ENCODE measurements at regions of chr1 and their contacts with region 1.

Region 1: DNA sequence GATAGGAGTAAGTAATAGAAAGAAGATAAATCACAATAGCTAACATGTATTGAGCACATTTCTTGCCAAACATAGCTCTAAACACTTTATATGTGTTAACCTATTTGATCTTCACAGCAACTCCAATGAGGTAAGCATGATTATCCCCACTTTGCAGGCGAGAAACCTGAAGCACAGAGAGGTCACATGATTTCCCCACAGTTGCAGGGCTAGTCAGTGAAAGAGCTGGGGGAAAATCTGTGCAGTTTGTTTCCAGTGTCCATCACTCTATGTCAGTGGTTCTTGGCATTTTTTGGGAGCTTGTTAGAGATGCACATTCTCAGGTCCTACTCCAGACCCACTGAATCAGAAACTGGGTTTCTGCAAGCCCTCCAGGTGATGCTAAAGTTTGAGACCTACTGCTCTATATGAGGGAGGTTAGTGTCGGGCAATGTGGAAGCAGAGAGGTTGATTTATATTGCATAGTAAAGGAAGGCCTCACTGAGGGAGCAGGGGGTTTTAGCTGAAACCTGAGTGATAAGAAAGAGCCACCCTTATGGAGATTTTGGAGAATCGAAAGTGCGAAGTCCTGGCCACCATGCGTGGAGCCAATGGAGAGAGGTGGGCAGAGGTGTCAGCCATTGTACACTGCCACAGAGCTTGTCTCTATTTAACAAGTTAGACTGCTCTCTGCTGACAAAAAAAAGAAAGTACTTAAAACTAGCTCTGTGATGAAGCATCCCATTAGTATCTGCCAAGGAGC is 20.9 kb downstream of the MCOLN3 start:
- DNase-seq: peak in 4 of 5 donors; percentile 28 to 69 (median 52)
- H3K4me3 ChIP-seq: peak overlapping the region; percentile 13
- H3K4me3 Mint-ChIP-seq: peak overlapping the region; percentile 67 to 93 (median 88)
- H3K27ac ChIP-seq: peak overlapping the region; percentile 34
- H3K27ac Mint-ChIP-seq: peak overlapping the region; percentile 55 to 96 (median 93)
- H3K4me1 ChIP-seq: peaks cover 8% of the 10 kb centered on the region
- H3K4me1 Mint-ChIP-seq: peaks cover 10 to 18% (median 14%) of the 10 kb centered on the region in 3 donors
- H3K27me3 ChIP-seq: no peaks in the 10 kb centered on the region
- H3K27me3 Mint-ChIP-seq: no peaks in the 10 kb centered on the region

Region 2: GRCh38 chr1:84913555-84913892 is 113.9 kb before region 1 on chr1:
- CTCF ChIA-PET with region 1: no interaction called
- POLR2A ChIA-PET with region 1: no interaction called
- DNase-seq: no peak
- H3K4me3 ChIP-seq: no peak overlapping the region
- H3K4me3 Mint-ChIP-seq: no peak overlapping the region
- H3K27ac ChIP-seq: no peak overlapping the region
- H3K27ac Mint-ChIP-seq: no peak overlapping the region
- H3K4me1 ChIP-seq: no peaks in the 10 kb centered on the region
- H3K4me1 Mint-ChIP-seq: no peaks in the 10 kb centered on the region
- H3K27me3 ChIP-seq: no peaks in the 10 kb centered on the region
- H3K27me3 Mint-ChIP-seq: peaks cover 3 to 15% of the 10 kb centered on the region in 2 donors

Region 3: DNA sequence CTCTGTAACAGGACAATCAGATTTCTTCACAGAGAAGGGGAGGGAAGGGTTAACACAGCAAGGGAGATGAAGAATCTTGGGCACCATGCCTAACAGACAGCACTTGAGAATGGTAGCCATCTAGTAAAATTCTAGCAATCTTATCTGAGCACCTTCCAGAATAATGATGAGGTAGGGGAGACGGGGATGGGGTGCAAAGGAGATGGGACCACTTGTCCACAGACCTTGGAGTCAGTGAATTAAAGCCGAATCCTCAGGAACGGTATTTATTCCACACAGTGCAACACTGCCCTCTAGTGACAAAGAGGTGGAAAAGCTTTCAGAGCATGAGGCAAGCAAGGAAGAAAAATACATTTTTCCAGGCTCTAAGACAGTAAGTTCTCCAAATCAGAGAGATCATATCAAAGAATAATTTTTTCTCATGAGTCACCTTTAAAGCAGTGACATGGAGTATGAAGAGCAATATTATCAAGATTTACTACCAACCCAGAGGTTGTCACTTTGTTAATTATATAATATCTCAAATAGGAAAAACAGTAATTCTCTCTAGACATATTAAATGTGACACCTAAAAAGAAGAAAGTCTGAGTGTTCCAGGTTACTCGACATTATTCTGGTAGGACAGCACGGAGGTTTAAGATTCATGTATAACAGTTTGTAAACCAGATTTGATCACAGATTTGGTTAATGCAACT is 91.2 kb before region 1 on chr1:
- CTCF ChIA-PET with region 1: interaction called, 24 read pairs
- POLR2A ChIA-PET with region 1: no interaction called
- DNase-seq: peak in 3 of 5 donors; percentile 52 to 60 (median 54)
- H3K4me3 ChIP-seq: no peak overlapping the region
- H3K4me3 Mint-ChIP-seq: no peak overlapping the region
- H3K27ac ChIP-seq: no peak overlapping the region
- H3K27ac Mint-ChIP-seq: peak overlapping the region in 1 of 8 donors; percentile 63
- H3K4me1 ChIP-seq: no peaks in the 10 kb centered on the region
- H3K4me1 Mint-ChIP-seq: peaks cover 2 to 7% (median 4%) of the 10 kb centered on the region in 3 donors
- H3K27me3 ChIP-seq: no peaks in the 10 kb centered on the region
- H3K27me3 Mint-ChIP-seq: no peaks in the 10 kb centered on the region

Region 4: DNA sequence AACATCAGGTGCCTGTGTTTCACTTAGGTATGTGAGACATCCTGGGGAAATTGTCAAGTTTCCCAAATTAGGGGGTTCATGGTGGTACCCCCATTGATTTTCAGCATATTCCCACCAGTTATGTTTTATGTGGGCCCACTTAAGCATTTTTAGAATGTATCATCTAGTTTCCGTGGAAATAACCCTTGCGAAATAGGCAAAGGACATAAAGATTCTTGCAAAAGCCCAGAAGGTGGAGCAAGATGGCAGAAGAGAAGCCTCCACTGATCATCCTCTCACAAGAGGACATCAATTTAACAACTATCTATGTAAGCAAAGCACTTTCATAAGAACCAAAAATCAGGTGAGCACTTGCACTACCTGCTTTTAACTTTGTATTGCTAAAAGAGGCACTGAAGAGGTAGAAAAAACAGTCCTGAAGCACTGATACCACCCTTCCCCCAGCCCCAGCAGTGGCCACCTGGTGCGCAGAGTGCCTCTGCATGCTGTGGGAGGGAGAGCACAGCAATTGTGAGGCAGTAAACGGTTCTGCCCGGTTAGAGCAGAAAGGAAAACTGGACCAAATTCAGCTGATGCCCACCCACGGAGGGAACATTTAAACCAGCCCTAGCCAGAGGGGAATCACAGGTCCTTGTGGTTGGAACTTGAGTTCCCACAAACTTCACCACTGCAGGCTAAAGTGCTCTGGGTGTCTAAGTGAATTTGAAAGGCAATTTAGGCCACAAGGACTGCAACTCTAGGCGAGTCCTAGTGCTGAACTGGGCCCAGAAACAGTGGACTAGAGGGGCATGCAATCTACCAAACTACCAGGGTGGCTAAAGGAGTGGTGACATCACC is 53.7 kb before region 1 on chr1:
- CTCF ChIA-PET with region 1: interaction called, 13 read pairs
- POLR2A ChIA-PET with region 1: no interaction called
- DNase-seq: peak in 1 of 5 donors; percentile 4
- H3K4me3 ChIP-seq: no peak overlapping the region
- H3K4me3 Mint-ChIP-seq: peak overlapping the region in 3 of 7 donors; percentile 5 to 79 (median 56)
- H3K27ac ChIP-seq: no peak overlapping the region
- H3K27ac Mint-ChIP-seq: peak overlapping the region; percentile 10 to 84 (median 52)
- H3K4me1 ChIP-seq: peaks cover 18% of the 10 kb centered on the region
- H3K4me1 Mint-ChIP-seq: peaks cover 57 to 90% (median 84%) of the 10 kb centered on the region in 3 donors
- H3K27me3 ChIP-seq: no peaks in the 10 kb centered on the region
- H3K27me3 Mint-ChIP-seq: no peaks in the 10 kb centered on the region

Region 5: DNA sequence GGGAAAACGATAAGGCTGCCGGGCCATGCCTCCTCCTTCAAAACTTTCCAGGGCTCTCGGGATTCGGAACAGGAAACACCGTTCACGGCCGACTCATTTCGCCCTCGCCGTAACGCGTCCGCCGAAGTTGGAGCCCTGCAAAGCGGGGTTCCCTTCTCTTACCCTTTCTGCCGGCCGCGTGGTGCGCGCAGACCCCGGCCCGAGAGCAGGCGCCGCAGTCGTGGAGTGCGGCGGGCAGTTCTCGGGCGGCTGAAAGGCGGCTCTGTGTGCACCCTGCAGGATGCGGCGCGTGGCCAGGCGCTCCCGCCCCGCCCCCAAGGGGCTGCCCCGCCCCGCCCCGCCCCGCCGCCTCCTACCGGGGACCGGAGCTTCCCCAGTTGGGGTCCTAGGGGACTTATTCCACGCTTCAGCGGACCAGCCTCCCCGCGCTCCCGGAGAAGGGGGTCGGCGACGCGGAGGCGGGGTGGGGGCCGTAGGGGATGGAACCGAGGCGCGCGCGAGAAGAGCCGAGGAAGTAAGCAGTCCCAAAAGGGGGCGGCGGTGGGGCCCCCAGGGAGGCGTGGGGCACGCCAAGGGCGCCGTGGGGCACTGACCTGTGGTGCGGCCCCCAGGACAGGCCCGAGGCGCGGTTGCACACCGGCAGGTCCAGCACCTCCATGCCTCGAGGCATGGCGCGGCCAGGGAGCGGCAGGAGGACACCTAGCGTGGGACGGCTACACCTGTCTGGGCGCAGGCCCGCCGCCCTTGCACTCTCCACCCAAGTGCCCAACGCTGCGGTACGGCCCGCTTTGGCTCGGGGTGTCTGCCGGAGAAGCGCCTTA is 30.4 kb before region 1 on chr1 and contains the start of gene MCOLN2:
- CTCF ChIA-PET with region 1: interaction called, 12 read pairs
- POLR2A ChIA-PET with region 1: interaction called, 3 read pairs
- DNase-seq: peak; percentile 43 to 80 (median 55)
- H3K4me3 ChIP-seq: peak within 1 kb of the TSS; percentile 85
- H3K4me3 Mint-ChIP-seq: peak within 1 kb of the TSS; percentile 89 to 98 (median 94)
- H3K27ac ChIP-seq: peak within 1 kb of the TSS; percentile 79
- H3K27ac Mint-ChIP-seq: peak within 1 kb of the TSS; percentile 80 to 94 (median 91)
- H3K4me1 ChIP-seq: peaks cover 24% of the 10 kb centered on the region
- H3K4me1 Mint-ChIP-seq: peaks cover 48 to 85% (median 81%) of the 10 kb centered on the region in 3 donors
- H3K27me3 ChIP-seq: peaks cover 4% of the 10 kb centered on the region
- H3K27me3 Mint-ChIP-seq: peaks cover 0 to 5% of the 10 kb centered on the region in 2 donors
- total RNA-seq, gene MCOLN2: 103 to 110 TPM

Region 6: GRCh38 chr1:85093644-85094043 is 66.2 kb after region 1 on chr1:
- CTCF ChIA-PET with region 1: no interaction called
- POLR2A ChIA-PET with region 1: no interaction called
- DNase-seq: no peak
- H3K4me3 ChIP-seq: no peak overlapping the region
- H3K4me3 Mint-ChIP-seq: no peak overlapping the region
- H3K27ac ChIP-seq: no peak overlapping the region
- H3K27ac Mint-ChIP-seq: no peak overlapping the region
- H3K4me1 ChIP-seq: no peaks in the 10 kb centered on the region
- H3K4me1 Mint-ChIP-seq: peaks cover 2 to 18% (median 4%) of the 10 kb centered on the region in 3 donors
- H3K27me3 ChIP-seq: no peaks in the 10 kb centered on the region
- H3K27me3 Mint-ChIP-seq: peaks cover 2 to 7% of the 10 kb centered on the region in 2 donors